Activated CD4-positive, alpha-beta memory T cell treated with anti-CD3 and anti-CD28 coated beads, Interleukin-2, amount 10 ng/mL, durations not matched to agents 7 days and 5 days (primary cell): ENCODE measurements at regions of chr4 and their contacts with region 1.

Region 1: GRCh38 chr4:140095694-140096482 is 58.1 kb downstream of the MAML3 start:
- DNase-seq: peak; percentile 72
- H3K4me3 Mint-ChIP-seq: peak overlapping the region; percentile 72
- H3K27ac Mint-ChIP-seq: peak overlapping the region; percentile 89
- H3K4me1 Mint-ChIP-seq: peaks cover 92% of the 10 kb centered on the region
- H3K27me3 Mint-ChIP-seq: no peaks in the 10 kb centered on the region

Region 2: GRCh38 chr4:140116442-140117104 is 20.7 kb after region 1 on chr4:
- CTCF ChIA-PET with region 1: interaction called, 4 read pairs
- POLR2A ChIA-PET with region 1: interaction called, 16 read pairs
- DNase-seq: peak; percentile 63
- H3K4me3 Mint-ChIP-seq: no peak overlapping the region
- H3K27ac Mint-ChIP-seq: peak overlapping the region; percentile 84
- H3K4me1 Mint-ChIP-seq: peaks cover 22% of the 10 kb centered on the region
- H3K27me3 Mint-ChIP-seq: peaks cover 21% of the 10 kb centered on the region

Region 3: DNA sequence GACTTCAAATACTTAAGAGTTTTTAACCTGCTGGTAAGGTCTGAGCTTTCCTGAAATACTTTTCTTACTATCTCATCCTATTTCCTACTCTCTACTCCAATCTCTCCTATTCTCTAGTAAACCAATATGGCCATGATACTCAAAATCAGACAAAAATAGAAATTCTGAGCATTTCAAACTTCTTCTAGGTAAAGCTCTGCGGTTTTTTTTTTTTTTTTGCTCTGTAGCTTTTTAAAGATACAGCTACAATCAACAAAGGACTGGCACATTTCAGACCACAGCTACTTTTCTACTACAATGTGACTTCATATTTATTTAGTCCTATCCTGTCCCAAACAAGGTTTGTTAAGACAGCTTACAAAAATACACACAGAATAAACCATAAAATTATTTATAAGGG is 27.0 kb after region 1 on chr4:
- CTCF ChIA-PET with region 1: interaction called, 3 read pairs
- POLR2A ChIA-PET with region 1: interaction called, 10 read pairs
- DNase-seq: no peak
- H3K4me3 Mint-ChIP-seq: peak overlapping the region; percentile 0
- H3K27ac Mint-ChIP-seq: peak overlapping the region; percentile 44
- H3K4me1 Mint-ChIP-seq: peaks cover 16% of the 10 kb centered on the region
- H3K27me3 Mint-ChIP-seq: peaks cover 31% of the 10 kb centered on the region

Region 4: GRCh38 chr4:140150886-140151698 is 55.2 kb after region 1 on chr4:
- CTCF ChIA-PET with region 1: interaction called, 3 read pairs
- POLR2A ChIA-PET with region 1: interaction called, 11 read pairs
- DNase-seq: peak; percentile 50
- H3K4me3 Mint-ChIP-seq: peak overlapping the region; percentile 91
- H3K27ac Mint-ChIP-seq: peak overlapping the region; percentile 78
- H3K4me1 Mint-ChIP-seq: peaks cover 38% of the 10 kb centered on the region
- H3K27me3 Mint-ChIP-seq: peaks cover 61% of the 10 kb centered on the region